ENCODE measurements at regions of chr17 and their contacts with region 1.

Region 1: GRCh38 chr17:31433091-31433790 is 41.8 kb downstream of the RAB11FIP4 start:
- DNase-seq: no peak
- H3K4me3 ChIP-seq: no peak overlapping the region
- H3K27ac ChIP-seq: no peak overlapping the region
- H3K4me1 ChIP-seq: no peaks in the 10 kb centered on the region
- H3K27me3 ChIP-seq: peaks cover 29% of the 10 kb centered on the region

Region 2: GRCh38 chr17:29844339-29845048 is 1588.7 kb before region 1 on chr17:
- in situ Hi-C with region 1: no loop called
- DNase-seq: peak; percentile 4
- H3K4me3 ChIP-seq: no peak overlapping the region
- H3K27ac ChIP-seq: no peak overlapping the region
- H3K4me1 ChIP-seq: peaks cover 8% of the 10 kb centered on the region; the same call in 1 of the 2 replicates
- H3K27me3 ChIP-seq: no peaks in the 10 kb centered on the region

Region 3: GRCh38 chr17:31524926-31525800 is 91.9 kb after region 1 on chr17:
- in situ Hi-C with region 1: loop called (anchors 5 kb)
- DNase-seq: peak; percentile 96
- H3K4me3 ChIP-seq: peak overlapping the region; percentile 21; the same call in 1 of the 2 replicates
- H3K27ac ChIP-seq: no peak overlapping the region
- H3K4me1 ChIP-seq: peaks cover 8% of the 10 kb centered on the region; the same call in 1 of the 2 replicates
- H3K27me3 ChIP-seq: no peaks in the 10 kb centered on the region

Region 4: GRCh38 chr17:31842183-31843069 is 409.2 kb after region 1 on chr17:
- in situ Hi-C with region 1: loop called (anchors 10 kb)
- DNase-seq: peak; percentile 73
- H3K4me3 ChIP-seq: peak overlapping the region; percentile 44
- H3K27ac ChIP-seq: peak overlapping the region; percentile 41
- H3K4me1 ChIP-seq: peaks cover 12% of the 10 kb centered on the region
- H3K27me3 ChIP-seq: no peaks in the 10 kb centered on the region